Activated CD4-positive, alpha-beta T cell treated with anti-CD3 and anti-CD28 coated beads for 36 hours (primary cell): ENCODE measurements at regions of chr3 and their contacts with region 1.

Region 1: DNA sequence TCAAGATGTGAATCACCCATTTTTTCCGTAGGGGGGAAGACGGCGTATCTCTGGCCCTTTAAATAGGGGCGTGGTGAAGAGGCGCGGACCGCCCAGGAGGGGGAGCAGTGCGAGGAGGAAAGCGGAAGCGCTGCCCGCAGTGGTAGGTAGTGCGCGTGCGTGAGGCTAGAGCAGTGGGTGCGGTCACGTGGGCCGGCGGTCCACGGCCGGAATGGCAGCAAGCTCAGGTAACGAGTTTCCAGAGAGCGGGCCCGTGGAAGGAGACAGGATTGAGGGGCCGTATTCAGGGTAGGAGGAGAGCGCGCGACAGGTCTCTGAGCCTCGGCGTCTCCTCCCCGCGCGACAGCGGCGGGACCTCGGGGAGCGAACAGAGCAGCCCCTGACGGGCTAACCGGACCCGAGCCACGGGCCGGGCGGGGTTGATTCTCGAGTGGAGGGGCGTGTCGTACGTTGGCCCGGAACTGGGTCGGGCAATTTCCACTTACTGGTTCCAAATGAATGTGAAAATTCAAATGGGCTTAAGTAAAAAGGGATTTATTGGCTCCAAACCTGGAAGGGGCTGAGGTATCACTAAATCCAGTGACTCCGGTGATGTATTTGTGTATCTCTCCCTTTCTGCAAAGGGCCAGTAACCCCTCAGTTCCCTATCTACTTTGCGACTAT is at the start of gene VPS8:
- DNase-seq: peak; percentile 97
- ATAC-seq: peak; percentile 82
- H3K4me3 Mint-ChIP-seq: peak within 1 kb of the TSS; percentile 97
- H3K27ac Mint-ChIP-seq: peak within 1 kb of the TSS; percentile 94
- H3K4me1 Mint-ChIP-seq: peaks cover 48% of the 10 kb centered on the region
- H3K27me3 Mint-ChIP-seq: no peaks in the 10 kb centered on the region
- total RNA-seq, gene VPS8: 24.7 to 33.9 TPM

Region 2: GRCh38 chr3:184561061-184561912 is 250.8 kb before region 1 on chr3 and contains the start of gene EPHB3:
- CTCF ChIA-PET with region 1: interaction called, 11 read pairs
- POLR2A ChIA-PET with region 1: interaction called, 3 read pairs
- intact Hi-C with region 1: loop called (anchors 1 kb)
- DNase-seq: peak; percentile 97
- ATAC-seq: peak; percentile 91
- H3K4me3 Mint-ChIP-seq: peak within 1 kb of the TSS; percentile 57
- H3K27ac Mint-ChIP-seq: peak within 1 kb of the TSS; percentile 74
- H3K4me1 Mint-ChIP-seq: peaks cover 30% of the 10 kb centered on the region
- H3K27me3 Mint-ChIP-seq: peaks cover 28% of the 10 kb centered on the region
- total RNA-seq, gene EPHB3: not detected

Region 3: GRCh38 chr3:184672977-184673870 is 138.9 kb before region 1 on chr3:
- CTCF ChIA-PET with region 1: no interaction called
- POLR2A ChIA-PET with region 1: no interaction called
- intact Hi-C with region 1: no loop called
- DNase-seq: no peak
- ATAC-seq: no peak
- H3K4me3 Mint-ChIP-seq: no peak overlapping the region
- H3K27ac Mint-ChIP-seq: no peak overlapping the region
- H3K4me1 Mint-ChIP-seq: no peaks in the 10 kb centered on the region
- H3K27me3 Mint-ChIP-seq: peaks cover 5% of the 10 kb centered on the region

Region 4: DNA sequence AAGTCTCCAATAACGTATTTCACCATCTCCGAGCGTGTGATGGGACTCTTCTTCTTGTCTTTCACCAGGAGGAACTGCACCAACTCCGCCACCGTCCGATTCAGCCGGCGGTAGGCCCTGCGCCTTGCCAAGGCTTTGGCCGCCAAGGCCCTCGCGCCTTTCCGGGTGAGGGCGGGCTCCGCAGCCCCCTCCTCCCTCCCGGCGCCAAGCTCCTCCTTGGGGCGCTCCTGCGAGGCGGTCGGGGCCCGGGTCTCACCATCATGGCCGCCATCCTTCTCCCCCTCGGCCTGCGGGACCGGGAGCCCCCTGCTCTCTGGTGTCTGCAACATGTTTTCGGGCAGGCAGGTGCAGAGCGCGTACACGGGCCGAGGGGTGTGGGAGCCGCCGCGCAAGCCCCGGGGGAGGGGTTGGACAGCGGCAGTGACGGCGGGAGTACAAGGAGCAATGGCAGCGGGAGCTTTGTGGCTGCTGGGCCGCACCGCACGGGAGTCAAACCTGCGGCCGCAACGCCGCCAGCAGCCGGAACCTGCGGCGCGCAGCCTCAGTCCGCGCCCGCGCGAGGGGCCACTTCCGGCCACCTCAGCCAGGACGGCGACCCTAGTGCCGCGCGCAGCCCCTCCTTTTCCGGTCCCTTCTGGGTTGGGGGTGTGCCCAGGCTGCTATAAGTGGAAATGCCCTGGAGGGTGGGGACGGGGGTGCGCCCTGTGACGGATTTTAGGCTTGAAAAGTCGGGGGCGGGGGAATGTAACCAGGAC is 100.5 kb before region 1 on chr3 and contains the start of gene MAGEF1:
- CTCF ChIA-PET with region 1: no interaction called
- POLR2A ChIA-PET with region 1: no interaction called
- intact Hi-C with region 1: loop called (anchors 1 kb)
- DNase-seq: peak; percentile 85
- ATAC-seq: peak; percentile 87
- H3K4me3 Mint-ChIP-seq: peak within 1 kb of the TSS; percentile 80
- H3K27ac Mint-ChIP-seq: peak within 1 kb of the TSS; percentile 97
- H3K4me1 Mint-ChIP-seq: peaks cover 32% of the 10 kb centered on the region
- H3K27me3 Mint-ChIP-seq: peaks cover 2% of the 10 kb centered on the region
- total RNA-seq, gene MAGEF1: 13.6 to 14.3 TPM

Region 5: DNA sequence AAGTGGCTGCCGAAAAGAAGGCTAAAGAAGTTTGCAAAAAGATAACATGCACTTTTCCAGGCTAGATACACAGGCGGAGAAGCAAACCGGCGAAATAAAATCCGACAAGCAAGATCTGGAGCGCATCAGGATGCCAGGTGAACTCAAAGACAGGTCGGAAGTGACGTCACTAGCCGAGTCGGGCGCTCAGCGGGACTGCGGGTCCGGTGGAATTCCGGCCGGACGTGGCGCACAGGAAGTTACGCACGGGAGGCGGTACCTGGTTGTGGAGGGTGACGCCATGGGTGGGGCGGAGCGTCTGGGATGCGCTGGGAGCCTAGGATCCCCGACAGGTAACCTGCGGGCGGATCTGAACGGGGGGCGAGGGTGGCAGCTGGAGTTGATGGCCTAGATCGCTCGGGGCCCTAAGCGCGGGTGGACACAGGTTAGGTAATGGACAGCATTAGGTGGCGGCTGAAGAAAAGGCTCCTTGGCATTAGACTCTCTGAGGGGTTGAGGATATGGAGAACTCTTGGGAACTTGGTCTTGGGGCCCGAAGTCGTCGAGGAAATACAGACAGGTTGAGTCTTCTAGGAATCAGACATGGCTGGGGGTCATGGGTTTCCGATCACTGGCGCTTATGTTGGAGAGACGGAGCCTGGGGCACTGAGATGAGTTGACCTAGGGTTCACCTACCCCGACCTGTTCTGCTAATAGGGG is 470.7 kb after region 1 on chr3:
- CTCF ChIA-PET with region 1: no interaction called
- POLR2A ChIA-PET with region 1: no interaction called
- intact Hi-C with region 1: loop called in 1 of 2 experiments (anchors 1 kb)
- DNase-seq: peak; percentile 98
- ATAC-seq: peak; percentile 100
- H3K4me3 Mint-ChIP-seq: peak overlapping the region; percentile 97
- H3K27ac Mint-ChIP-seq: peak overlapping the region; percentile 92
- H3K4me1 Mint-ChIP-seq: peaks cover 19% of the 10 kb centered on the region
- H3K27me3 Mint-ChIP-seq: peaks cover 7% of the 10 kb centered on the region

Region 6: GRCh38 chr3:185585859-185586685 is 773.9 kb after region 1 on chr3 and contains the start of gene SENP2:
- CTCF ChIA-PET with region 1: no interaction called
- POLR2A ChIA-PET with region 1: no interaction called
- intact Hi-C with region 1: loop called in 1 of 2 experiments (anchors 1 kb)
- DNase-seq: peak; percentile 100
- ATAC-seq: peak; percentile 98
- H3K4me3 Mint-ChIP-seq: peak within 1 kb of the TSS; percentile 87
- H3K27ac Mint-ChIP-seq: peak within 1 kb of the TSS; percentile 93
- H3K4me1 Mint-ChIP-seq: peaks cover 26% of the 10 kb centered on the region
- H3K27me3 Mint-ChIP-seq: no peaks in the 10 kb centered on the region
- total RNA-seq, gene SENP2: 23.2 to 24.6 TPM